Activated CD4-positive, alpha-beta memory T cell treated with anti-CD3 and anti-CD28 coated beads for 36 hours (primary cell): ENCODE measurements at regions of chr14 and their contacts with region 1.

Region 1: GRCh38 chr14:50736932-50737419 is 68.9 kb upstream of the SAV1 start:
- DNase-seq: peak; percentile 66
- H3K4me3 Mint-ChIP-seq: no peak overlapping the region
- H3K27ac Mint-ChIP-seq: no peak overlapping the region
- H3K4me1 Mint-ChIP-seq: peaks cover 43% of the 10 kb centered on the region
- H3K27me3 Mint-ChIP-seq: no peaks in the 10 kb centered on the region

Region 2: GRCh38 chr14:50231475-50232275 is 505.3 kb before region 1 on chr14 and contains the start of gene SOS2:
- CTCF ChIA-PET with region 1: no interaction called
- POLR2A ChIA-PET with region 1: no interaction called
- intact Hi-C with region 1: loop called (anchors 10 kb)
- DNase-seq: peak; percentile 86
- H3K4me3 Mint-ChIP-seq: peak within 1 kb of the TSS; percentile 78
- H3K27ac Mint-ChIP-seq: peak within 1 kb of the TSS; percentile 85
- H3K4me1 Mint-ChIP-seq: peaks cover 40% of the 10 kb centered on the region
- H3K27me3 Mint-ChIP-seq: no peaks in the 10 kb centered on the region
- total RNA-seq, gene SOS2: 19.6 to 20.9 TPM

Region 3: DNA sequence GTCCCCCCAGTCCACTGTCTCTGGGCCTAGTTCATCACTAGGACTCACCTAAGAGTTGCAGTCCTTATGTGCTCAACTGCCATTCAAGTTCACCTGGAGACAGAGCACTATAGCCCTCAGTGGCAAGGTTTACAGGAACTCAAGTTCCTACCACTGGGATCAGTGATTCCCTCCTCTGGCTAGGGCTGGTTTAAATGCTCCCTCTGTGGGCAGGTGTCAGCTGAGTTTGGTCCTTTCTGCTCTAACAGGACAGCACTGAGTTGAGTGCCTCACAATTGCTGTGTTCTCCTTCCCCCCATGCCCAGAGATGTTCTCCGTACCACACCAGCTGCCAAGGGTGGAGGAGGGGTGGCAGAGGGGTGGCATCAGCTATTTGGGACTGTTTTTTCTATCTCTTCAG is 48.1 kb before region 1 on chr14:
- CTCF ChIA-PET with region 1: no interaction called
- POLR2A ChIA-PET with region 1: no interaction called
- intact Hi-C with region 1: no loop called
- DNase-seq: no peak
- H3K4me3 Mint-ChIP-seq: no peak overlapping the region
- H3K27ac Mint-ChIP-seq: no peak overlapping the region
- H3K4me1 Mint-ChIP-seq: no peaks in the 10 kb centered on the region
- H3K27me3 Mint-ChIP-seq: no peaks in the 10 kb centered on the region

Region 4: GRCh38 chr14:50726372-50727107 is 10.4 kb before region 1 on chr14:
- CTCF ChIA-PET with region 1: interaction called, 15 read pairs
- POLR2A ChIA-PET with region 1: interaction called, 14 read pairs
- intact Hi-C with region 1: loop called (anchors 1 kb)
- DNase-seq: peak; percentile 24
- H3K4me3 Mint-ChIP-seq: peak overlapping the region; percentile 45
- H3K27ac Mint-ChIP-seq: peak overlapping the region; percentile 94
- H3K4me1 Mint-ChIP-seq: peaks cover 33% of the 10 kb centered on the region
- H3K27me3 Mint-ChIP-seq: no peaks in the 10 kb centered on the region

Region 5: GRCh38 chr14:50773632-50774541 is 36.9 kb after region 1 on chr14:
- CTCF ChIA-PET with region 1: interaction called, 8 read pairs
- POLR2A ChIA-PET with region 1: no interaction called
- intact Hi-C with region 1: loop called (anchors 5 kb)
- DNase-seq: peak; percentile 56
- H3K4me3 Mint-ChIP-seq: no peak overlapping the region
- H3K27ac Mint-ChIP-seq: no peak overlapping the region
- H3K4me1 Mint-ChIP-seq: peaks cover 16% of the 10 kb centered on the region
- H3K27me3 Mint-ChIP-seq: no peaks in the 10 kb centered on the region

Region 6: DNA sequence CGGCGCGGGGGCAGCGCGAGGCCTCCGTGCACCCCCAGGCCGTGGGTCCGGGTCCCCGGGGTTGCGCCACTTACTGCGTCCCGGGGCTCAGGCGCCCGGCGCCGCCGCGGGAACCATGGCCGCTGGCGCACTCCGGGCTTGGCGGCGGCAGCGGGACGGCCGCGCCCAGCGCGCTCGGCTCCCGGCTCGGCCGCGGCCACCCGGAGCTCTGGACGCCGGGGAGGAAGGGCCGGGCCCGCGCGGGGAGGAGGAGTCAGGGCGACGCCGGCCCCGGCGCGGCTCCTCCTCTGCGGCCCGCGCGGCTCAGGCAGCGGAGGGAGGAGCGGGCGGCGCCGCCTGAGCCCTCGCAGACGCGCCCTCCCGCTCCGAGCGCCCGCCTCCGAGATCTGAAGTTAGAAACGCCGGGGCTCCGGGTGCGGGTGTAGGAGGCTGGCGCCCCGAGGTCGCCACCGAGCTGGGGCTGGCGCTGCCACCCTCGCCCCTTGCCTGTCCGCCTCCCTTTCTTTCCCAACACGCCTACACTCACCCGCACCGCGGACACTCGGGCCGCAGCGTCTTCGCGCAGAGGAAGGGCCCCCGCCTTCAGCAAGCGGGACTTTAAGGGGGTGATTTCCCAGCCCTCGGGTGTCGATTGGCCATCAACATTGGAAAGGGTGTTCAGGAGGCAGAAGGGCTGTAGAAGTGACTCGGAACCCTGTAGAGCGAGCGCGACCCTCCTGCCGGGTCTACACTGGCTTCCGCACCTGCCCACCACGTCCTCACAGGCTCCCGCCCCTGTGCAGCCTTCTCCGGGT is 94.2 kb after region 1 on chr14 and contains the start of gene NIN:
- CTCF ChIA-PET with region 1: no interaction called
- POLR2A ChIA-PET with region 1: no interaction called
- intact Hi-C with region 1: loop called (anchors 5 kb)
- DNase-seq: peak; percentile 77
- H3K4me3 Mint-ChIP-seq: peak within 1 kb of the TSS; percentile 92
- H3K27ac Mint-ChIP-seq: peak within 1 kb of the TSS; percentile 86
- H3K4me1 Mint-ChIP-seq: peaks cover 54% of the 10 kb centered on the region
- H3K27me3 Mint-ChIP-seq: peaks cover 6% of the 10 kb centered on the region
- total RNA-seq, gene NIN: 44.7 to 44.8 TPM